ENCODE measurements at regions of chr10 and their contacts with region 1.

Region 1: GRCh38 chr10:75401569-75402485 is at the start of gene ZNF503:
- DNase-seq: peak; percentile 97
- ATAC-seq: peak; percentile 67
- H3K4me3 ChIP-seq: peak within 1 kb of the TSS; percentile 99
- H3K27ac ChIP-seq: peak within 1 kb of the TSS; percentile 100
- H3K4me1 ChIP-seq: peaks cover 2% of the 10 kb centered on the region; the same call in 1 of the 2 replicates
- H3K27me3 ChIP-seq: 0 out of 2 replicates have a peak, but pooled peaks cover 3% of the 10 kb centered on the region
- CTCF ChIP-seq: 0 out of 2 replicates have a peak, but pooled peaks have one; percentile 6
- POLR2A ChIP-seq: peak; percentile 99
- RAD21 ChIP-seq: peak; percentile 26
- total RNA-seq, gene ZNF503: 0.36 and 0.83 TPM in 2 replicates

Region 2: DNA sequence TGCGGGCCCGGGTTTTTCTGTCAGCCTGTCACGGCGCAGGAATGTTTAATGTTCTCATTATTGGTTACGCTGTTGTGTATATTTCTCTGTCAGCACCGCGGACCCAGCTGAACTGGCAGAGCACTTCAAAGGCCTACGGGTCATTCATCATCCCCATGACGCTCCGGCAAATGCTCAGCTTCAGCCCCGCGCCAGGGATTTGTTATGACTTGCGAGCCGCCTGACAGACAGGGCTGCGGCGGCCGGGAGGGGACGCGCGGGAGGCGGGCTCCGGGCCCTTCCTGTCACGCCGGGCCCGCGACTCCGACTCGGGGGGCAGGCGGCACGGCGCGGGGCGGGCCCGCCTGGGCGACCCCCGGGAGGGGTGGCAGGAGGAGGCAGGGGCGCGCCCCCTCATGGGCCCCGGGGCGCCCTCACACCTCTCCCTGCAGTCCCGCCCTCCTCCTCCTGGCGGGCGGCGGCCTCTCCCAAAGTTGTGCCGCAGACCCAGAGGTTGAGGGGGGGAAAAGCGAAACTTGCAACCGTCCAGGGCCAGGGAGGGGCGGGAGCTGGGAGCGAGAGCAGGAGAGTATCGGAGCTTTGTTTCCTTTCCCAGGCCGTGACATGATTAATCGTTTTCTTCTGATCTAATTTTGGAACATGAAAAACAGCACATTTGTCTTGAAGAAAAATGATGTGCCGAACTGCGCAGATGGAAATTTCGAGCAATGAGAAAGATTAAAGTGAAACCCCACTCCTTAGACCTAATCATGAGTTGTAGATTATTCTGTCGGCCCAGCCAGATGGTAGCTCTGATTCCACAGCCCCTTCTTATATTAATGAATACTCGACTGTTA is 106.7 kb before region 1 on chr10:
- CTCF ChIA-PET with region 1: no interaction called
- POLR2A ChIA-PET with region 1: no interaction called
- dilution Hi-C with region 1: no loop called
- in situ Hi-C with region 1: loop called (anchors 10 kb)
- intact Hi-C with region 1: no loop called
- DNase-seq: peak; percentile 93
- ATAC-seq: peak; percentile 78
- H3K4me3 ChIP-seq: peak overlapping the region; percentile 32
- H3K27ac ChIP-seq: peak overlapping the region; percentile 18
- H3K4me1 ChIP-seq: peaks cover 24% of the 10 kb centered on the region
- H3K27me3 ChIP-seq: no peaks in the 10 kb centered on the region; the same call in 1 of the 2 replicates
- CTCF ChIP-seq: peak; percentile 18; the same call in 1 of the 2 replicates
- POLR2A ChIP-seq: no peak
- RAD21 ChIP-seq: peak; percentile 16; the same call in 1 of the 2 replicates

Region 3: DNA sequence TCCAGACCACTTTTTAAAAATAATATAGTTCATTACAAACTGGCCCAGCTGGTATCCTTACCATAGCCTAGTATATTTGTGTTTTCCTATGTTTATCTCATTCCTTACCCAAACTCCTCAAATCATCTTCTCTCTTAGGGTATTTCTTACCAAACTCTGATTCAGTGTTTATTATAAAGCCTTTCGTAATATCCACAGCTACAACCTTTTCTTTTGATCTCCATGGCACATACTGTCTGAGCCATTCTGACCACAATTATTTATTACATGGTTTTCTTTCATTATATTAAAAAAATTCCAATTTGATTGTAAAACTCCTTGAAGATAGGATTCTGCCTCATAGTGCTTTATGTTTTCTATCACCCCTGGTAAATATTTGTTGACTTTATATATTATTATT is 123.8 kb after region 1 on chr10:
- CTCF ChIA-PET with region 1: no interaction called
- POLR2A ChIA-PET with region 1: no interaction called
- dilution Hi-C with region 1: no loop called
- in situ Hi-C with region 1: no loop called
- intact Hi-C with region 1: no loop called
- DNase-seq: no peak
- ATAC-seq: no peak; the same call in 1 of the 2 replicates
- H3K4me3 ChIP-seq: no peak overlapping the region
- H3K27ac ChIP-seq: no peak overlapping the region
- H3K4me1 ChIP-seq: peaks cover 1% of the 10 kb centered on the region; the same call in 1 of the 2 replicates
- H3K27me3 ChIP-seq: peaks cover 10% of the 10 kb centered on the region
- CTCF ChIP-seq: no peak
- POLR2A ChIP-seq: no peak
- RAD21 ChIP-seq: no peak

Region 4: DNA sequence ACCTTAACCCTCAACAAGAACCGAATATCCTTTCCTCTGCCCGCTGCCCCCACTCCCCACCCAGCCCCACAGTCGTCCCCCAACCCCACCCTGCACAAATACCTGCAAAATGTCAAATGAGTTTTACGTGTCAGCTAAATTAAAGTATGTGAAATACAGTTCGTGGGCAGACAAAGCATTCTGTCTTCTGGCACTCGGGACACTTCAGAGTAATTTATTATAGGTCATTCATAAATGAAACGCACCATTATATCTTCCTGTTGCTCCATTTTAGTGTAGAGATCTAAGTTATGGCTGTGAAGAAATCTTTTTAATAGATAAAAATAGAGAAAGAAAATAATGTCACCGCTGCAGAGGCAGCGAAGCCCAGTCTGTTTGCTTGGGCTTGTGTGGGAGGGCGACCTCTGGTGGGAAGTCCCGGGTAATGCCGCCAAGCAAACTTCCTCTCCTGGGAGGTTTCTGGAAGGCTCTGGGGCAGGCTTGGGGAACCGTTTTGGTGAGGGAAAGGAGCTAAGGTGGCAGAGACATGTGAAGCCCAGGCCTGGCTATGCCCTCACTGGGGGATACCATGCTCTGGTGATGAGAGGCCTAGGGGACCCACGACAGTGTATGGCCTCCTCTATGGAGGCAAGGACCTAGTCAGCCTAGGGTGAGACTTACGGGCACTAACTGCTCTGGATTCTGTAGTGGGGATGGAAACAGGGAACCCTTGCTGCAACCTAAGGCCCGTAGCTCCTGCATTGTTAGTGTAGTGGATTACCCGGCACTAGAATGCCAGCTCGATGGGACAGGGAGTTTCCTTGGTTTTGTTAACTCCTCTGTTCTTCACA is 634.5 kb after region 1 on chr10:
- CTCF ChIA-PET with region 1: no interaction called
- POLR2A ChIA-PET with region 1: no interaction called
- dilution Hi-C with region 1: no loop called
- in situ Hi-C with region 1: loop called (anchors 25 kb)
- intact Hi-C with region 1: loop called (anchors 1 kb)
- DNase-seq: peak; percentile 56
- ATAC-seq: peak; percentile 97
- H3K4me3 ChIP-seq: no peak overlapping the region
- H3K27ac ChIP-seq: no peak overlapping the region
- H3K4me1 ChIP-seq: no peaks in the 10 kb centered on the region
- H3K27me3 ChIP-seq: peaks cover 2% of the 10 kb centered on the region; the same call in 1 of the 2 replicates
- CTCF ChIP-seq: peak; percentile 83
- POLR2A ChIP-seq: no peak
- RAD21 ChIP-seq: peak; percentile 76

Region 5: GRCh38 chr10:76251841-76252671 is 850.2 kb after region 1 on chr10:
- CTCF ChIA-PET with region 1: no interaction called
- POLR2A ChIA-PET with region 1: no interaction called
- dilution Hi-C with region 1: no loop called
- in situ Hi-C with region 1: no loop called
- intact Hi-C with region 1: loop called (anchors 1 kb)
- DNase-seq: peak; percentile 93
- ATAC-seq: peak; percentile 84
- H3K4me3 ChIP-seq: no peak overlapping the region
- H3K27ac ChIP-seq: no peak overlapping the region
- H3K4me1 ChIP-seq: peaks cover 3% of the 10 kb centered on the region; the same call in 1 of the 2 replicates
- H3K27me3 ChIP-seq: no peaks in the 10 kb centered on the region
- CTCF ChIP-seq: no peak
- POLR2A ChIP-seq: no peak
- RAD21 ChIP-seq: no peak

Region 6: GRCh38 chr10:76432274-76433012 is 1030.6 kb after region 1 on chr10:
- CTCF ChIA-PET with region 1: no interaction called
- POLR2A ChIA-PET with region 1: interaction called, 3 read pairs
- dilution Hi-C with region 1: no loop called
- in situ Hi-C with region 1: no loop called
- intact Hi-C with region 1: loop called (anchors 10 kb)
- DNase-seq: peak; percentile 74
- ATAC-seq: peak; percentile 72
- H3K4me3 ChIP-seq: no peak overlapping the region
- H3K27ac ChIP-seq: 0 out of 2 replicates have a peak overlapping the region, but pooled peaks have one; percentile 5
- H3K4me1 ChIP-seq: peaks cover 21% of the 10 kb centered on the region
- H3K27me3 ChIP-seq: no peaks in the 10 kb centered on the region
- CTCF ChIP-seq: no peak
- POLR2A ChIP-seq: no peak
- RAD21 ChIP-seq: no peak

Region 7: GRCh38 chr10:76902949-76903348 is 1501.1 kb after region 1 on chr10:
- CTCF ChIA-PET with region 1: no interaction called
- POLR2A ChIA-PET with region 1: interaction called, 16 read pairs
- dilution Hi-C with region 1: no loop called
- in situ Hi-C with region 1: no loop called
- intact Hi-C with region 1: no loop called
- DNase-seq: no peak
- ATAC-seq: no peak
- H3K4me3 ChIP-seq: no peak overlapping the region
- H3K27ac ChIP-seq: no peak overlapping the region
- H3K4me1 ChIP-seq: no peaks in the 10 kb centered on the region
- H3K27me3 ChIP-seq: no peaks in the 10 kb centered on the region
- CTCF ChIP-seq: no peak
- POLR2A ChIP-seq: no peak
- RAD21 ChIP-seq: no peak

Region 8: GRCh38 chr10:77111611-77112550 is 1710.1 kb after region 1 on chr10:
- CTCF ChIA-PET with region 1: no interaction called
- POLR2A ChIA-PET with region 1: no interaction called
- dilution Hi-C with region 1: no loop called
- in situ Hi-C with region 1: loop called (anchors 5 kb)
- intact Hi-C with region 1: loop called (anchors 5 kb)
- DNase-seq: peak; percentile 87
- ATAC-seq: peak; percentile 90
- H3K4me3 ChIP-seq: no peak overlapping the region
- H3K27ac ChIP-seq: no peak overlapping the region
- H3K4me1 ChIP-seq: peaks cover 3% of the 10 kb centered on the region
- H3K27me3 ChIP-seq: no peaks in the 10 kb centered on the region
- CTCF ChIP-seq: peak; percentile 88
- POLR2A ChIP-seq: peak; percentile 38; the same call in 1 of the 2 replicates
- RAD21 ChIP-seq: peak; percentile 93